Psoas muscle (tissue), 8 donors: ENCODE measurements at regions of chr2 and their contacts with region 1.

Region 1: GRCh38 chr2:25441345-25442070 is 99.8 kb upstream of the DNMT3A start:
- DNase-seq: no peak
- ATAC-seq: no peak
- H3K4me3 ChIP-seq: no peak overlapping the region
- H3K27ac ChIP-seq: no peak overlapping the region
- H3K4me1 ChIP-seq: no peaks in the 10 kb centered on the region
- H3K27me3 ChIP-seq: no peaks in the 10 kb centered on the region
- CTCF ChIP-seq: no peak

Region 2: DNA sequence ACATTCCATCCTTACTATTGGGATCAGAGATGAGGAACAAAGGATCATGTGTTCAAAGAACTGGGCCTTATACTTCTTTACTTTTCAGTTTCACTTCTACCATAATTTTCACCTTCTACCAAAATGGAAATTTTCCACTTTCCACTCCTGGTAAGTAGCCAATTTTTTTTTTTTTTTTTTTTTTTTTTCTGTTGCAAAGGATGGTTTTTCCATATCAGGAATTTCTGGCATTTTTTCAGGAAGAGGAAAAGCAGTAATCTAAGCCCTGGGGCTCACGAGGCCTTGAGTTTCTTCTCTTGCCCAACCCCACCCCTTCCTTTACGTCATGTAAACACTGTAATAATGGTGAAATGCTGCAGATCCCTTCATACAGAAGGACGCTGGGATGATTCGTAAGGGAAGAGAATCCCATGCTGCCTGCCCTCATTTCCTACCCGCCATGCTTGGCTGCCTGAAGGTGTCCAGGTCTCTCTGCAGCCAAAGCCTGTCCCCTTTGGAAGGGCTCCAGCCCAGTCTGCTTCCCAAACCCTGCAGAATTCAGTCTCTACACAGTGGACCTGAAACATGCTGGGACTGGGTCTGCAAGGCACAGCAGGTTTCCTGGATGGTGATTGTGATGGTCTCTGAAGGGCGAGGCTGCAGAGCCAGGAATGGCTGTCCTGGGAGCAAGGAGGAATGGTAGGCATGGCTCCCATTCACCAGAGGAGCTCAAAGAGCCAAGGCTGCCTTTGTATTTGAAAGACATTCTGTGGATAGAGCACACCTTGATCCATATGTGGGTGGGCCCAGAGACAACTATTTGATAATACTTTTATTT is 342.6 kb before region 1 on chr2:
- intact Hi-C with region 1: loop called in 1 of 2 experiments (anchors 5 kb)
- DNase-seq: no peak
- ATAC-seq: peak in 3 of 4 donors; percentile 37 to 59 (median 56)
- H3K4me3 ChIP-seq: no peak overlapping the region
- H3K27ac ChIP-seq: peak overlapping the region; percentile 39
- H3K4me1 ChIP-seq: no peaks in the 10 kb centered on the region
- H3K27me3 ChIP-seq: no peaks in the 10 kb centered on the region
- CTCF ChIP-seq: no peak